ENCODE measurements at regions of chr16 and their contacts with region 1.

Region 1: GRCh38 chr16:57300387-57301125 is 16.1 kb upstream of the PLLP start:
- DNase-seq: peak; percentile 100
- ATAC-seq: peak; percentile 90 to 98 (median 92)
- H3K4me3 ChIP-seq: peak overlapping the region; percentile 67
- H3K4me3 Mint-ChIP-seq: peak overlapping the region; percentile 67
- H3K27ac ChIP-seq: peak overlapping the region; percentile 83
- H3K27ac Mint-ChIP-seq: no peak overlapping the region
- H3K4me1 ChIP-seq: peaks cover 37% of the 10 kb centered on the region
- H3K4me1 Mint-ChIP-seq: peaks cover 0 to 5% of the 10 kb centered on the region in 2 donors
- H3K27me3 ChIP-seq: no peaks in the 10 kb centered on the region
- H3K27me3 Mint-ChIP-seq: no peaks in the 10 kb centered on the region
- CTCF ChIP-seq: peak; percentile 92

Region 2: GRCh38 chr16:57185944-57186871 is 114.3 kb before region 1 on chr16 and contains the starts of genes PSME3IP1 and RSPRY1:
- intact Hi-C with region 1: loop called (anchors 2 kb)
- DNase-seq: peak; percentile 95 to 100
- ATAC-seq: peak; percentile 88 to 95 (median 93)
- H3K4me3 ChIP-seq: peak within 1 kb of the TSS; percentile 98
- H3K4me3 Mint-ChIP-seq: peak within 1 kb of the TSS; percentile 100
- H3K27ac ChIP-seq: peak within 1 kb of the TSS; percentile 96
- H3K27ac Mint-ChIP-seq: peak within 1 kb of the TSS; percentile 98 to 99
- H3K4me1 ChIP-seq: peaks cover 21% of the 10 kb centered on the region
- H3K4me1 Mint-ChIP-seq: peaks cover 49 to 50% of the 10 kb centered on the region in 2 donors
- H3K27me3 ChIP-seq: no peaks in the 10 kb centered on the region
- H3K27me3 Mint-ChIP-seq: no peaks in the 10 kb centered on the region
- CTCF ChIP-seq: no peak
- total RNA-seq, gene PSME3IP1: 129 to 148 (median 133) TPM
- total RNA-seq, gene RSPRY1: 22.6 to 26.6 (median 23.4) TPM

Region 3: DNA sequence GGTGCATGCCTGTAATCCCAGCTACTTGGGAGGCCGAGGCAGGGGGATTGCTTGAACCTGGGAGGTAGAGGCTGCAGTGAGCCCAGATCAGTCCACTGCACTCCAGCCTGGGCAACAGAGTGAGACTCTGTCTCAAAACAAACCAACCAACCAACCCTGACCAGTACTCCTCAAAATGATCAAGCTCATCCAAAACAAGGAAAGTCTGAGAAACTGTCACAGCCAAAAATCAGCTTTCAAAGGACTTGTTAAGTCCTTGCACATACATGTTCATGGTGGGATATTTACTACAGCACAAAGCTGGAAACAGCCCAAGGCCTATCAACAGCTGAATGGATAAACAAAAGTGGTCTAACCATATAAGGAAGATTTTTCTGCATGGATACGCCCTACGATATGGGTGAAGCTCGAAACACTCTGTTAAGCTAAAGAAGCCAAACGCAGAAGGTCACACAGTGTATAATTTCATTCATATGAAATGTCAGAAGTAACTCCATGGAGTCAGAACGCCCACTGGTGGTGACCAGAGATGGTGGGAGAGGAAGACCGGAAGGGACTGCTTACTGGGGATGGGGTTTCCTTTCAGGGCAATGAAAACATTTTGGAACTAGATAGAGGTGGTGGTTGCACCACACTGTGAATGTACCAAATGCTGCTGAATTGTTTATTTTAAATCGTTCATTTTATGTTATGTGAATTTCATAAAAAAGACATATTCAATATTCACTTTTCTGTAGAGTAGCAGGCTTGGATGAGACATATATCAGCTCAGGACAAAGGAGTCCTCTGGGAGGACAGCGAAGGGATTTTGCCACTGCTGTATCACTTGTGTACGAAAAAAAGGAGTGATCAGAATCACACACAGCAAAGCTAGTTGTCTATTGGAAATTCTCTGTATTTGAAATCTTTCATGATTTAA is 121.7 kb after region 1 on chr16:
- intact Hi-C with region 1: loop called (anchors 1 kb)
- DNase-seq: no peak
- ATAC-seq: no peak
- H3K4me3 ChIP-seq: no peak overlapping the region
- H3K4me3 Mint-ChIP-seq: no peak overlapping the region
- H3K27ac ChIP-seq: no peak overlapping the region
- H3K27ac Mint-ChIP-seq: no peak overlapping the region
- H3K4me1 ChIP-seq: peaks cover 17% of the 10 kb centered on the region
- H3K4me1 Mint-ChIP-seq: peaks cover 9 to 15% of the 10 kb centered on the region in 2 donors
- H3K27me3 ChIP-seq: no peaks in the 10 kb centered on the region
- H3K27me3 Mint-ChIP-seq: no peaks in the 10 kb centered on the region
- CTCF ChIP-seq: no peak

Region 4: DNA sequence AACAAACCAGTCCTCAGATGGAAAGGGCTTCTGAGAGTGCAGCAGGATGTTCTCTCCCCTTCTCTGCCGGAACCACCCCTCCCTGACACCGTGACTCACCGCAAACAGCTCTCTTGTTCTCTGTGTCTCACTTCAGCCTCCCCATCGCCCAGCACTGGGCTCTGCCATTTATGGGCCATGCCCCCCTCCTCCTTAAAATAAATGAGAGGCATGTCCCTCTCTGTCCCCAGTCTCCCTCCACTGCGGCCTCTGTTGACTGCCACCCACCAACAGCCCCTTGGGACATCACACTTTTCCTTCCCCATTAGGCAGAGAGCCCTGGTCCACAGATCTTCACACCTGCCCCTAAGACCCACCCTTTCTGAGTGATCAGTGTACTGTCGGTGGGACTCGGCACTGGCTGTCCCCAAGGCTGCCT is 229.6 kb after region 1 on chr16:
- intact Hi-C with region 1: loop called (anchors 5 kb)
- DNase-seq: peak; percentile 75 to 86
- ATAC-seq: peak; percentile 92 to 95 (median 94)
- H3K4me3 ChIP-seq: no peak overlapping the region
- H3K4me3 Mint-ChIP-seq: peak overlapping the region; percentile 92
- H3K27ac ChIP-seq: peak overlapping the region; percentile 92
- H3K27ac Mint-ChIP-seq: peak overlapping the region; percentile 99
- H3K4me1 ChIP-seq: peaks cover 77% of the 10 kb centered on the region
- H3K4me1 Mint-ChIP-seq: peaks cover 59 to 60% of the 10 kb centered on the region in 2 donors
- H3K27me3 ChIP-seq: no peaks in the 10 kb centered on the region
- H3K27me3 Mint-ChIP-seq: no peaks in the 10 kb centered on the region
- CTCF ChIP-seq: no peak

Measured in natural killer cell (primary cell).